ENCODE measurements at regions of chr11 and their contacts with region 1.

Region 1: GRCh38 chr11:99422581-99423427 is 402.1 kb downstream of the CNTN5 start:
- DNase-seq: no peak
- ATAC-seq: no peak

Region 2: GRCh38 chr11:99316776-99317520 is 105.9 kb before region 1 on chr11:
- intact Hi-C with region 1: loop called (anchors 5 kb)
- DNase-seq: peak; percentile 34
- ATAC-seq: peak; percentile 73

Region 3: GRCh38 chr11:99351624-99352023 is 71.2 kb before region 1 on chr11:
- intact Hi-C with region 1: loop called (anchors 10 kb)
- DNase-seq: no peak
- ATAC-seq: peak; percentile 49

Measured in Right ventricle myocardium inferior (tissue), 1 donor.